Right ventricle myocardium superior (tissue), 1 donor: ENCODE measurements at regions of chr7 and their contacts with region 1.

Region 1: GRCh38 chr7:157273208-157274093 is 63.4 kb upstream of the DNAJB6 start:
- DNase-seq: peak; percentile 80
- ATAC-seq: peak; percentile 80

Region 2: DNA sequence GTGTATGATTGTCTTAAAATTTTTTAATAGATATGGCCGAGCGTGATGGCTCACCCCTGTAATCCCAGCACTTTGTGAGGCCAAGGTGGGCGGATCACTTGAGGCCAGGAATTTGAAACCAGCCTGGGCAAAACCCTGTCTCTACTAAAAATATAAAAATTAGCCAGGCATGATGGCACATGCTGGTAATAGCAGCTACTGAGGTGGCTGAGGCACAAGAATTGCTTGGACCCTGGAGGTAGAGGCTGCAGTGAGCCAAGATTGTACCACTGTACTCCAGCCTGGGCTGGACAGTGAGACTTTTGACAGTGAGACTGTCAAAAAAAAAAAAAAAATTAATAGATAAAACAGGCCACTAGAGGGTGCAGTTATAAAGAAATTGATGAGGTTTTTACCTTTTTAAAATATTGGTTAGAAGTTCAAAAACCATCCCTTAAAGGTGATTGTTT is 303.5 kb before region 1 on chr7:
- intact Hi-C with region 1: loop called (anchors 10 kb)
- DNase-seq: no peak
- ATAC-seq: no peak

Region 3: DNA sequence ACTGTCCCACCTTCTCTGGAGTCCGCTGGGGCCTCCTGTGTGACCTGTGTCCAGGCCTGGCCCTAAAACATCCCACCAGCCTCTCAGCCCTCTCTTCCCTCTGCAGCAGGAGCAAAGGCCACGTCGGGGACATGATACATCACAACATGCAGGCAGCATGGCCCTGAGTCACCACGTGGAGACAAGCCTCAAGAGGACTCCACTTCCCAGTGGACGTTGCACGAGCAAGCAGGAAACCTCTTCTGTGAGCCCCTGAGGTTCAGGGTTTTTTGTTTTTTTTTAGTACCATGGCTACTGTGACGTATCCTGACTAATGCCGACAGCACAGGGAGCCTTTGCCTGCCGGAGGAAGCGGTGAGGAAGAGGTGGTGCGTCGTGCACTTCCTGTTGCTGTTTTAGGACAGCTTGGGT is 229.3 kb after region 1 on chr7:
- intact Hi-C with region 1: no loop called
- DNase-seq: peak; percentile 48
- ATAC-seq: no peak